ENCODE measurements at regions of chr20 and their contacts with region 1.

Region 1: DNA sequence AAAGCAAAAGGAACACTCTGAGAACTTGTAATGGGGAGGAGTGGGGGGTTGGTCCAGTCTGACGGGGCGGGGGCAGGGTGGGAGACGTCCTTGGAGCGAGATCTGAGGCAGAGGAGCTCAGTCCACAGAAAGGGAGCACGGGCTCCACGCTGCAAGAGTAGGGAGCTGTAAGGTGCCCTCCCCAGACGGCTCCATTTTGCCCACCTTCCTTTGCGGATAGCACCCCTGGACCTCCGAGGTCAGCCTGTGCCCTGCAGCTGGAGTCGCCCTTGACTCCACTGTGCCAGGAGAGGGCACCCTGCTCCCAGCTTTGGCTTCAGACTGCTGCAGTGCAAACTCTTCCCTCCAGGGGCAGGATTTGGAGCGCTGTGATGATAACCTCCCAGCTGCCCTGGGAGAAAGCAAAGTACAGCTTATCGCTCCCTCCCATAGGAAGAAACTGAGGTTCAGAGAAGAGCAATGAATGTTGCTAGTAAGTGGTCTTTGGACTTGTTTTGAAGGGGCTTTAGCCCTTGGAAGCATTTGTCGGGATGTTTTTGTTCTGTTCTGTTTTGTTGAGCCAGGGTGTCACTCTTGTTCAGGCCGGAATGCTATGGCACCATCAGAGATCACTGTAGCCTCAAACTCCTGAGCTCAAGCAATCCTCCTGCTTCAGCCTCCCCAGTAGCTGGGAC is 9.5 kb upstream of the AHCY start:
- DNase-seq: peak; percentile 91
- H3K4me3 ChIP-seq: peak overlapping the region; percentile 30 to 55; a peak in 3 of 4 replicates
- H3K27ac ChIP-seq: no peak overlapping the region
- H3K4me1 ChIP-seq: peaks cover 0 to 4% of the 10 kb centered on the region in 2 experiments; a peak in 2 of 4 replicates
- H3K27me3 ChIP-seq: no peaks in the 10 kb centered on the region
- CTCF ChIP-seq: peak; percentile 99
- EP300 ChIP-seq: no peak
- RAD21 ChIP-seq: peak; percentile 99

Region 2: GRCh38 chr20:33697129-33697528 is 615.6 kb before region 1 on chr20:
- CTCF ChIA-PET with region 1: no interaction called
- POLR2A ChIA-PET with region 1: no interaction called
- DNase-seq: peak; percentile 42
- H3K4me3 ChIP-seq: no peak overlapping the region
- H3K27ac ChIP-seq: peak overlapping the region; percentile 72 to 94; a peak in 3 of 4 replicates
- H3K4me1 ChIP-seq: peaks cover 4 to 24% of the 10 kb centered on the region in 2 experiments; a peak in 3 of 4 replicates
- H3K27me3 ChIP-seq: no peaks in the 10 kb centered on the region
- CTCF ChIP-seq: no peak
- EP300 ChIP-seq: no peak
- RAD21 ChIP-seq: no peak

Region 3: GRCh38 chr20:34124469-34125249 is 188.0 kb before region 1 on chr20:
- CTCF ChIA-PET with region 1: no interaction called
- POLR2A ChIA-PET with region 1: no interaction called
- DNase-seq: peak; percentile 47
- H3K4me3 ChIP-seq: no peak overlapping the region
- H3K27ac ChIP-seq: peak overlapping the region in 1 of 2 experiments; percentile 7; a peak in 2 of 4 replicates
- H3K4me1 ChIP-seq: peaks cover 0 to 4% of the 10 kb centered on the region in 2 experiments; a peak in 3 of 4 replicates
- H3K27me3 ChIP-seq: no peaks in the 10 kb centered on the region
- CTCF ChIP-seq: no peak
- EP300 ChIP-seq: no peak
- RAD21 ChIP-seq: no peak

Region 4: DNA sequence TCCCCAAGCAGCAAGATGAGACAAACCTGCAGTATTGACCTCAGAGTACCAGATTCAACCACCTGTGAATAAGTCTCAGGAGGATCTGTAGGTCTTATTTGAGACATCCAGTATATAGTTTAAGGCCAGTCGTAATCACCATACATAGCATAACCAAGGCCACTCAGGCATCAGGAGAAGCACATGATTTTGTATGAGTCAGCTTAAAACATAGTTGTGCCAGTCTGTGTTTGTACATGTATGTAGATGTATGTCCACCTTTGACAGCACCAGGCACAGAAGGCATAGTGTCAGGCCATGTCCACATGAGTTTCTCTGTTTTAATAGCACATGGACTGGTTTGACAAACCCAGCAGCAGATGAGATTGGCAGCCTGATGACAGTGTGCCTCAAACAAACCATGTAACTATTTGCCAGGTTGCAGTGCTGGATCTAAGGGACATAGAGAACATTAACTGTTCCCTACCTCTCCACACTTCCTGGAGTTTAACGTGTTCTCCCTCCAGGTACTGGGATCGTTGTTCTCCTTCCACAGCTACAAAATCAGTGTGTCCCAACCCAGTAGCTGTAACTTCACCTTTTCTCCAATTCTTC is 80.1 kb before region 1 on chr20:
- CTCF ChIA-PET with region 1: no interaction called
- POLR2A ChIA-PET with region 1: no interaction called
- DNase-seq: no peak
- H3K4me3 ChIP-seq: no peak overlapping the region
- H3K27ac ChIP-seq: no peak overlapping the region
- H3K4me1 ChIP-seq: no peaks in the 10 kb centered on the region
- H3K27me3 ChIP-seq: no peaks in the 10 kb centered on the region
- CTCF ChIP-seq: no peak
- EP300 ChIP-seq: no peak
- RAD21 ChIP-seq: no peak

Region 5: DNA sequence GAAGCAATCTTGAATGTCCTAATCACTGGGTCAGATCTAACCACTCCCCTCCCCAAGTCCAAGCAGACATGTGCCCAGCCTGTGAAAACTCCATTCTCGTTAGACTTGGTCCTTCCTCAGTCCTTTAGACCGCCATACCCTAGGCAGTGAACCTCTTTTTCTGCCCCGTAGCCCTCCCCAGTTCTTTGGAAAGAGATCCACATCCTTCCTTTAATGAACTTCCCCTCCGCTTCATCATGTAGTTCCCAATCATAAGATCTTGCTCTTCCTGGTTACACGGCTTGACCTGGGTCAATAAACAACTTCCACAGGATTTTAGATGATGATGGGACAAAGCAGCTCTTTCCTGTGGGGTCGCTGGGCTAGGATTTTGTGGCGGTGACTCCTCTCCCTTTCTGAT is 19.1 kb before region 1 on chr20:
- CTCF ChIA-PET with region 1: interaction called, 12 read pairs
- POLR2A ChIA-PET with region 1: no interaction called
- DNase-seq: no peak
- H3K4me3 ChIP-seq: no peak overlapping the region
- H3K27ac ChIP-seq: no peak overlapping the region
- H3K4me1 ChIP-seq: no peaks in the 10 kb centered on the region; a peak in 1 of 4 replicates
- H3K27me3 ChIP-seq: no peaks in the 10 kb centered on the region
- CTCF ChIP-seq: no peak
- EP300 ChIP-seq: no peak
- RAD21 ChIP-seq: no peak

Region 6: DNA sequence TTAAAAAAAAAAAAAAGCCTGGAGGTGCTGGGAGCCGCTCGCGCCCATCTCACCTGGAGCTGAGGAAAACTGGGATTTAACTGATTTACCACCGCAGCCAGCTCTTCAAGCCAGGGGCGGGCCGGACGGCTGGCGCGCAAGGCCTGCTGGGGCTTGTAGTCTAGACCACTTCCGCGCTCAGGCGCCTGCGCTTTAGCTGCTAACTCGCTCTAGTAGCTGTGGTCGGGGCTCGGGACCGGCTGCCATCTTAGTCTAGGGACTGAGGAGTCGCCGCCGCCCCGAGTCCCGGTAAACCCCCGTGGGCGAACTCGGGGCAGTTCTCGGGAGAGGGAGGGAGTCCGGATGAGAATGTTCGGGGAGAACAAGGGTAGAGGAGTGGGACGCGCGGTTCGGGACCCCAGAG is 50.4 kb after region 1 on chr20 and contains the start of gene ITCH:
- CTCF ChIA-PET with region 1: interaction called, 25 read pairs
- POLR2A ChIA-PET with region 1: no interaction called
- DNase-seq: peak; percentile 96
- H3K4me3 ChIP-seq: peak within 1 kb of the TSS; percentile 68 to 92
- H3K27ac ChIP-seq: peak within 1 kb of the TSS; percentile 77 to 89
- H3K4me1 ChIP-seq: peaks cover 2 to 11% of the 10 kb centered on the region in 2 experiments; a peak in 2 of 4 replicates
- H3K27me3 ChIP-seq: no peaks in the 10 kb centered on the region
- CTCF ChIP-seq: no peak
- EP300 ChIP-seq: no peak
- RAD21 ChIP-seq: no peak
- polyA plus RNA-seq, gene ITCH: 3.8 and 4.1 TPM in 2 replicates

Region 7: DNA sequence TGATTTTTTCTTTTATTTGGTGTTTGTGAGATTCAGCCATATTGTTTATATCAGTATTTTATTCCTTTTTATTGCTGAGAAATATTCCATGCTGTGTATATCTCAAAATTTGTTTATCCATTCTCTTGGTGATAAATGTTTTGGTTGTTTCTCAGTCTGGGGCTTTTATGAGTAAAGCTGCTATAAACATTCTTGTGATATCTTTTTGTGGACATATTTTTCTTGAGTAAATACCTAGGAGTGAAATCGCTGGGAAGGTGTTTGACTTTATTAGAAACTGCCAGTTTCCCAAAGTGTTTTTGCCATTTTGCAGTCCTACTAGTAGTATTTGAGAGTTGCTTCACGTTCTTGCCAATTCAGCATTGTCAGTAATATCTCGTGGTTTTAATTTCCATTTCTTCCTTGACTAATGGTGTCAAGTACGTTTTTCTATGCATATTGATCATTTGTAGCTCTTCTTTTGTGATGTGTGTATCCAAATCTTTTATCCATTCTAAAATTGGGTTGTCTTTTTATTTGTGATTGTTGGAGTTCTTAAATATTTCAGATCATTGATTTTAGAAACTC is 172.5 kb after region 1 on chr20:
- CTCF ChIA-PET with region 1: interaction called, 23 read pairs
- POLR2A ChIA-PET with region 1: no interaction called
- DNase-seq: no peak
- H3K4me3 ChIP-seq: no peak overlapping the region
- H3K27ac ChIP-seq: no peak overlapping the region
- H3K4me1 ChIP-seq: no peaks in the 10 kb centered on the region
- H3K27me3 ChIP-seq: no peaks in the 10 kb centered on the region
- CTCF ChIP-seq: no peak
- EP300 ChIP-seq: no peak
- RAD21 ChIP-seq: no peak

Region 8: GRCh38 chr20:34522969-34523871 is 210.5 kb after region 1 on chr20:
- CTCF ChIA-PET with region 1: interaction called, 72 read pairs
- POLR2A ChIA-PET with region 1: no interaction called
- DNase-seq: peak; percentile 69
- H3K4me3 ChIP-seq: peak overlapping the region in 1 of 2 experiments; percentile 15; a peak in 2 of 4 replicates
- H3K27ac ChIP-seq: peak overlapping the region in 1 of 2 experiments; percentile 36; a peak in 1 of 4 replicates
- H3K4me1 ChIP-seq: peaks cover 15 to 17% of the 10 kb centered on the region in 2 experiments; a peak in 3 of 4 replicates
- H3K27me3 ChIP-seq: no peaks in the 10 kb centered on the region
- CTCF ChIP-seq: peak; percentile 63
- EP300 ChIP-seq: no peak
- RAD21 ChIP-seq: peak; percentile 71

Region 9: DNA sequence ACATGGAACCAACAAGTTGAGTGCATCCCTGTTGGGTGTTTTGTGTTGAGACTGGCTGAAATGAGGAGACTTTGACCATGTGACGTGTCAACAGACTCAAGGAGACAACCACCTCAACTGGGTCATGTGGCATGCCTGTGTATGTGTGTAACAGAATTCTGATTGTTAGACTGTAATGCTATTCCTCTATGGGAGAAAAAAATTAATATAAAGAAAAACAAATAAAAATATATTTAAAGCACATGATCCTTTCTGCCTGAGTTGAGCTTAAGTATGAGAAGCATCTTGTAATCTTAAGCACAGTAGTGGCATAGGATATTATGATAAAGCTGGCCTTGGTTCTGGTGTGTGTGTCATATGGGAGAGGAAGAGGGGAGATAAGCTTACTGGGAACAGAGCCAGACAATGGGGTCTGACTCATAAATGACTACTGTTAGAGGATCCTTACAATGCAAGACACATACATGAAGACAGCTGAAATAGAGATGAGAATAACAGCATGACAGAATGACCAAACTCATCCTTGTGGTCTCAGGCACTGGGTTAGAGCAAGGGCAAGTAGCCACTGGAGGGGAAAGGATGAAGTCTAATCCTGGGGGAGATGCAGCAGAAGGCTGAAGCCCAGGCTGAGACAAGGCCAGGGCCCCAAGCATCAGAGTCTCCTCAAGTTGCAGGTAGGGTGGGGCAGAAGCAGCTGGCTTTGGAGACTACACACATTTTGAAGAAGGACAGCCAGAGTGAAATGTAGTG is 400.7 kb after region 1 on chr20:
- CTCF ChIA-PET with region 1: interaction called, 13 read pairs
- POLR2A ChIA-PET with region 1: no interaction called
- DNase-seq: peak; percentile 71
- H3K4me3 ChIP-seq: no peak overlapping the region
- H3K27ac ChIP-seq: peak overlapping the region; percentile 69 to 82
- H3K4me1 ChIP-seq: peaks cover 16 to 20% of the 10 kb centered on the region in 2 experiments; a peak in 3 of 4 replicates
- H3K27me3 ChIP-seq: no peaks in the 10 kb centered on the region
- CTCF ChIP-seq: no peak
- EP300 ChIP-seq: no peak; a peak in 1 of 4 replicates
- RAD21 ChIP-seq: 0 out of 2 replicates have a peak, but pooled peaks have one; percentile 11

Measured in SK-N-SH (cell line).